PC-9 (cell line): ENCODE measurements at regions of chr2 and their contacts with region 1.

Region 1: GRCh38 chr2:212912445-212913103 is 238.8 kb downstream of the IKZF2 start:
- DNase-seq: peak; percentile 69 to 94
- H3K4me3 ChIP-seq: peak overlapping the region; percentile 54; the same call in 1 of the 2 replicates
- H3K27ac ChIP-seq: peak overlapping the region; percentile 100
- H3K4me1 ChIP-seq: peaks cover 76% of the 10 kb centered on the region
- H3K27me3 ChIP-seq: no peaks in the 10 kb centered on the region
- CTCF ChIP-seq: no peak

Region 2: DNA sequence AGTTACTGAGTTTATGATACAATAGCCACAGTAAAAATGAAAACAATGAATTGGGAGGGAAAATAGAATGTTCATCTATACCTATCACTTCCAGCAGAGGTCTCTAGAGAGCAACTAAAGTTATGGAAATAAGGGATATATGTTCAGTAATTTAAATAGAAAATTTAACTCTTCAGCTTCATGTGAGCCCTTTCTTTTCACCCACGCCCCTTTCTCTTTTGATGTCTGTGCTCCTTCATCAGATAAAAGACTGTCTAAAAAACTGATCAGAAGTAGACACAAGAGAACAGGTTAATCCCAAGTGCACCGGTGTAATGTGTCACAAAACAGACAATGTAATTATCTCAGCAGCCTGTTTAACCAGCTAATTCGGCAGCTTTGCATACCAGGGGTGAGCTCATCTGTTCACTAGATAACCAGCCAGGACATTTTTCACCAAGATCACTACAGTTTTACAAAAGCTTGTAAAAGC is 135.5 kb before region 1 on chr2:
- CTCF ChIA-PET with region 1: no interaction called
- POLR2A ChIA-PET with region 1: no interaction called
- intact Hi-C with region 1: loop called (anchors 1 kb)
- DNase-seq: peak; percentile 15 to 52
- H3K4me3 ChIP-seq: no peak overlapping the region
- H3K27ac ChIP-seq: no peak overlapping the region
- H3K4me1 ChIP-seq: no peaks in the 10 kb centered on the region; the same call in 1 of the 2 replicates
- H3K27me3 ChIP-seq: no peaks in the 10 kb centered on the region
- CTCF ChIP-seq: peak; percentile 73

Region 3: DNA sequence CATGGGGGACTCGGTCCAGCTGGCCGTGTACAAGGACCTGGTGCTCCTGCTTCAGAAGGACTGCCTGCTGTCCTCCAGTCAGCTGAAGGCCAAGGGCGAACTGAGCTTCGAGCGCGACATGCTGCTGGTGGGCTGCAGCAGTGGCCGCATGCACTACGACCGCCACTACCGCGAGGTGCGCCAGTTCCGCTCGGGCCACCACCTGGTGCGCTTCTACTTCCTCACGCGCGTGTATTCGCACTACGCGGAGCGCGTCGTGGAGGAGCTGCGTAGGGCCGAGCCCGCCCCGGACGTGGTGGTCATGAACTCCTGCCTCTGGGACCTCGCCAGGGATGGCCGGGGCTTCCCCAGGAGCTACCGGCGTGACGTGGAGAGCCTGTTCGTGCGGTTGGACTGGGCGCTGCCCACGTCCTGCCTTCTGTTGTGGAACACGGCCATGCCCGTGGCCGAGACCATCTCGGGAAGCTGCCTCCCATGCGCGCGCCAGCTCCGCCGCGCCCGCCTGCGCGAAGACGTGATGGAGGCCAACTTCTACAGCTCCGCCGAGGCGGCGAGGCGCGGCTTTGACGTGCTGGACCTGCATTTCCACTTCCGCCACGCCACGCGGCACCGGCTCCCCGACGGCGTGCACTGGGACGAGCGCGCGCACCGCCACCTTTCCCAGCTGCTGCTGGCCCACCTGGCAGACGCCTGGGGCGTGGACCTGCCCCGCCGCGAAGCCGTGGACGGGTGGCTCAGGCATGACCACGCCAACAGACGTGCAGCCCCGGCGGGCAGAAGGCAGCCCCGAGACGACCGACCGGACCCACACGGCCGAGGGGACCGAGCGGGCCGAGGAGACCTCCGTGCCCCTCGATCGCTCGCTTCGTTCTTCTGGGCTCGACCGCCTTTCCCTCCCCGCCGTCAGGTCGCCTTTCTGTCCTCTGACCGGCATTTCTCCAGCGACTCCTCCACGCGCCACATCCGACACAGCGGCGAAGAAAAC is 80.1 kb before region 1 on chr2:
- CTCF ChIA-PET with region 1: no interaction called
- POLR2A ChIA-PET with region 1: interaction called, 10 read pairs
- intact Hi-C with region 1: no loop called
- DNase-seq: no peak
- H3K4me3 ChIP-seq: no peak overlapping the region
- H3K27ac ChIP-seq: no peak overlapping the region
- H3K4me1 ChIP-seq: no peaks in the 10 kb centered on the region
- H3K27me3 ChIP-seq: no peaks in the 10 kb centered on the region
- CTCF ChIP-seq: no peak

Region 4: GRCh38 chr2:212863185-212863588 is 49.4 kb before region 1 on chr2:
- CTCF ChIA-PET with region 1: no interaction called
- POLR2A ChIA-PET with region 1: no interaction called
- intact Hi-C with region 1: loop called (anchors 5 kb)
- DNase-seq: peak; percentile 32 to 48
- H3K4me3 ChIP-seq: no peak overlapping the region
- H3K27ac ChIP-seq: no peak overlapping the region
- H3K4me1 ChIP-seq: no peaks in the 10 kb centered on the region
- H3K27me3 ChIP-seq: no peaks in the 10 kb centered on the region
- CTCF ChIP-seq: peak; percentile 69

Region 5: GRCh38 chr2:212940816-212941215 is 28.2 kb after region 1 on chr2:
- CTCF ChIA-PET with region 1: no interaction called
- POLR2A ChIA-PET with region 1: no interaction called
- intact Hi-C with region 1: loop called (anchors 2 kb)
- DNase-seq: peak; percentile 64 to 90
- H3K4me3 ChIP-seq: no peak overlapping the region
- H3K27ac ChIP-seq: peak overlapping the region; percentile 76
- H3K4me1 ChIP-seq: peaks cover 24% of the 10 kb centered on the region
- H3K27me3 ChIP-seq: no peaks in the 10 kb centered on the region
- CTCF ChIP-seq: no peak

Region 6: DNA sequence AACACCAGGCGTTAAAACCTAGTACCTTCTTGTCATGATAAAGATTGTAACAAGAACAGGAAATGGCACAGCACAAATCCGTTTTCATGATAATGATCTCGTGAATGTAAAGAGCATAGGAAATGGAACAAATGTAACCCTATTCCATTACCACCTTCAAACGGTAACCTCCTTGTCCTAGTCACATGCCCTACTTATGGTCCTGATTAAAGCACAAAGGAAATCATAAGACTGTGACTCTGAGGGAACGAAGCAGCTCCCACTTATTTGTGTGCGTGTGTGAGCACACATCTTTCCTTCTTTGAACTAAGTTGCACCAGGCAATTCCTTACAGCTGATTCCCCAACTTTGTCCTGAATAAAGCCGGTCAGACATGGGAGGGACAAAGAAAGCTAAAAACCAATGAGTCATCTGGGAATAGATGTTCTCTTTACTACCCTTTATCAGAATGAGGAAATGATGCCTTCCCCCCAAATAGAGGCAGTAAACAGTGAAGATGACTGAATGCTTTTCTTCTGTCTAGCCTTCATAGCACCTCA is 46.3 kb after region 1 on chr2:
- CTCF ChIA-PET with region 1: no interaction called
- POLR2A ChIA-PET with region 1: interaction called, 8 read pairs
- intact Hi-C with region 1: loop called (anchors 2 kb)
- DNase-seq: peak in 1 of 2 experiments; percentile 50
- H3K4me3 ChIP-seq: no peak overlapping the region
- H3K27ac ChIP-seq: no peak overlapping the region; the same call in 1 of the 2 replicates
- H3K4me1 ChIP-seq: peaks cover 44% of the 10 kb centered on the region
- H3K27me3 ChIP-seq: no peaks in the 10 kb centered on the region
- CTCF ChIP-seq: no peak

Region 7: GRCh38 chr2:213021971-213022899 is 109.7 kb after region 1 on chr2:
- CTCF ChIA-PET with region 1: no interaction called
- POLR2A ChIA-PET with region 1: no interaction called
- intact Hi-C with region 1: loop called (anchors 5 kb)
- DNase-seq: peak in 1 of 2 experiments; percentile 29
- H3K4me3 ChIP-seq: no peak overlapping the region
- H3K27ac ChIP-seq: no peak overlapping the region
- H3K4me1 ChIP-seq: no peaks in the 10 kb centered on the region
- H3K27me3 ChIP-seq: no peaks in the 10 kb centered on the region
- CTCF ChIP-seq: no peak